Mammary epithelial cell (primary cell): ENCODE measurements at regions of chr7 and their contacts with region 1.

Region 1: DNA sequence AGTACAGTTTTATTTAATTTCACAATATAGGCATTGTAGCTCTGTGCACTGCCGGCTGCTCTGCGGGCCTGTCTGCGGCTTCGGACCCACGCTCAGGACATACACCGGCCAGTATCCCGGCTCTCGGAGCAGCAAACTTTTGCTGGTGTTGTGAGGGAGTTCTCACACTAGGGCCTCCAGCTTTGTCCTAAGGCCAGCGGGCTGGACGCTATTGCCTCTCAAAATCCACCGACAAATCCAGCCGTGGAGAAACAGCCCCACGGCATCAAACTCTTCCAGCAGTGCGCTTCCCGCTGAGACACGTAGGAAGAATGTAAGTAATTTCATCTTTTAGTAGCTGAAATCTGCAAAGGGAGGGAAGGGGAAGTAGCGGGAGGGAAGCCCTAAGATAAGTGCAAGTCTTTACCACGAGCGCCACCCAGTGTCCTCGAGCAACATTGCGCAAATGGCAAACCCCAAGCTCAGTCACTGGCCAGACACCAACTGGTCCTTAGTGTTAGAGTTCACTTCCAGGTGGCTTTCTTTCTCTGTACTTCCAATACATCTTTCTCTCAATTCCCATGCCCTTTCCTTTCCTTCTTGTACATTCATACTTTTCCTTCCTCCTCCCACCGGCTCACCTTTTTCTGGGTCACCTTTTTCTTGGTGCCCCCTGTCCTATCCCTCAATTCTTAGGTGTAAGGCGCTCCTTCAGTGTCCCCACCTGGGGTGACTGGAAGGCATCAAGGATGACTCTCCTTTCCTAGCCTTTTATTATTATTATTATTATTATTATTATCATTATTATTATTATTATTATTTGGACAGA is 3.0 kb upstream of the DLX5 start:
- DNase-seq: peak; percentile 59
- H3K4me3 ChIP-seq: peak overlapping the region in 1 of 3 experiments; percentile 12
- H3K27ac ChIP-seq: no peak overlapping the region
- H3K4me1 ChIP-seq: peaks cover 8% of the 10 kb centered on the region
- H3K27me3 ChIP-seq: peaks cover 24% of the 10 kb centered on the region
- CTCF ChIP-seq: peak; percentile 84 to 90

Region 2: GRCh38 chr7:95916573-95917297 is 1110.9 kb before region 1 on chr7:
- CTCF ChIA-PET with region 1: no interaction called
- dilution Hi-C with region 1: no loop called
- in situ Hi-C with region 1: loop called (anchors 25 kb)
- intact Hi-C with region 1: loop called (anchors 1 kb)
- DNase-seq: peak; percentile 35
- H3K4me3 ChIP-seq: no peak overlapping the region
- H3K27ac ChIP-seq: no peak overlapping the region
- H3K4me1 ChIP-seq: no peaks in the 10 kb centered on the region
- H3K27me3 ChIP-seq: no peaks in the 10 kb centered on the region
- CTCF ChIP-seq: peak; percentile 85 to 92

Region 3: DNA sequence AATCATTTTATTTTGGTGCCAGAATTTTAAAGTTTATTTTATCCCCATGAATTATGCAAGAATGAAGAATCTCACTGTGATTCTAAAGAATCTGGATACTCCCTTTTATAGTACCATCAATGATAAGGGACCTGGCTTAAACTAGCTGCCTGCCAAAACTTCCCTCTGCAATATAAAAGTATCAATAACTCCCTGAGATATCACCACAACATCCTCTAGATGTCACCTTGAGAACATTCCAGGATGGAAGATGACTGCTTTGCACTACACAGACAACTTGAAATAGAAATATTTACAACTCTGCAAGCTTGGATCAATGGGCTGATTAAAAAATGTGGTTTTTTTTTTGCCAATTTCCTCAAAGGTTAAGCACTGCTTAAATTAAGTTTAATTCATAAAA is 847.8 kb before region 1 on chr7:
- CTCF ChIA-PET with region 1: no interaction called
- dilution Hi-C with region 1: no loop called
- in situ Hi-C with region 1: no loop called
- intact Hi-C with region 1: loop called (anchors 5 kb)
- DNase-seq: no peak
- H3K4me3 ChIP-seq: no peak overlapping the region
- H3K27ac ChIP-seq: no peak overlapping the region
- H3K4me1 ChIP-seq: peaks cover 15% of the 10 kb centered on the region
- H3K27me3 ChIP-seq: no peaks in the 10 kb centered on the region
- CTCF ChIP-seq: peak in 1 of 2 donors; percentile 15

Region 4: GRCh38 chr7:96414931-96415292 is 612.7 kb before region 1 on chr7:
- CTCF ChIA-PET with region 1: no interaction called
- dilution Hi-C with region 1: no loop called
- in situ Hi-C with region 1: loop called in 1 of 2 experiments (anchors 25 kb)
- intact Hi-C with region 1: loop called (anchors 1 kb)
- DNase-seq: peak; percentile 18
- H3K4me3 ChIP-seq: no peak overlapping the region
- H3K27ac ChIP-seq: no peak overlapping the region
- H3K4me1 ChIP-seq: no peaks in the 10 kb centered on the region
- H3K27me3 ChIP-seq: no peaks in the 10 kb centered on the region
- CTCF ChIP-seq: peak; percentile 92 to 99

Region 5: GRCh38 chr7:96709381-96710228 is 318.0 kb before region 1 on chr7 and contains the start of gene SEM1:
- CTCF ChIA-PET with region 1: no interaction called
- dilution Hi-C with region 1: no loop called
- in situ Hi-C with region 1: no loop called
- intact Hi-C with region 1: loop called (anchors 5 kb)
- DNase-seq: peak; percentile 81
- H3K4me3 ChIP-seq: peak within 1 kb of the TSS; percentile 68 to 82 (median 79)
- H3K27ac ChIP-seq: peak within 1 kb of the TSS; percentile 96
- H3K4me1 ChIP-seq: peaks cover 15% of the 10 kb centered on the region
- H3K27me3 ChIP-seq: no peaks in the 10 kb centered on the region
- CTCF ChIP-seq: peak in 1 of 2 donors; percentile 8
- total RNA-seq, gene SEM1: 14.7 to 63.5 TPM

Region 6: DNA sequence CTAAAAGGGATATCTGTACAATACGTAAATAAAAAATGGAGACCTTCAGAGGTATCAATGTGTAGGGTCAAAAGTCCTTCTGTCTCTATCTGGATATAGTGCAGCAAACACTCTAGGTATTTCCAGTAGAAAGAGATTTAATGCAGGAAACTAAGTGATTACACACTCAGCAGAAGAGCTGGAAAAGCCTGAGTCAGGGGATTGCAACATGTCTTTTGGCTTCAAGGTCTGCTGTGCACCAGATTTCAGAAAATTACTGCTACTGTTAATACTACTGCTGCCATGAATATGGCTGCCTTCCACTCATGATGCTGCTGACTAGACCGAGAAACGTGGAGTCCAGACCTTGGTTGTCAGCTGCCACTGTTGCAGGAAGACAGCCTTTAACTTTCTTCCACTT is 117.1 kb before region 1 on chr7:
- CTCF ChIA-PET with region 1: no interaction called
- dilution Hi-C with region 1: no loop called
- in situ Hi-C with region 1: no loop called
- intact Hi-C with region 1: loop called (anchors 10 kb)
- DNase-seq: peak; percentile 24
- H3K4me3 ChIP-seq: no peak overlapping the region
- H3K27ac ChIP-seq: no peak overlapping the region
- H3K4me1 ChIP-seq: no peaks in the 10 kb centered on the region
- H3K27me3 ChIP-seq: peaks cover 2% of the 10 kb centered on the region
- CTCF ChIP-seq: no peak

Region 7: GRCh38 chr7:96942112-96942511 is 85.5 kb before region 1 on chr7:
- CTCF ChIA-PET with region 1: no interaction called
- dilution Hi-C with region 1: no loop called
- in situ Hi-C with region 1: no loop called
- intact Hi-C with region 1: no loop called
- DNase-seq: no peak
- H3K4me3 ChIP-seq: no peak overlapping the region
- H3K27ac ChIP-seq: no peak overlapping the region
- H3K4me1 ChIP-seq: no peaks in the 10 kb centered on the region
- H3K27me3 ChIP-seq: peaks cover 2% of the 10 kb centered on the region
- CTCF ChIP-seq: no peak